IMR-90 (cell line): ENCODE measurements at regions of chr18 and their contacts with region 1.

Region 1: GRCh38 chr18:23356915-23357601 is 96.0 kb upstream of the RIOK3 start:
- DNase-seq: peak; percentile 55
- ATAC-seq: peak; percentile 62
- H3K4me3 ChIP-seq: no peak overlapping the region
- H3K27ac ChIP-seq: peak overlapping the region; percentile 98; the same call in 1 of the 2 replicates
- H3K4me1 ChIP-seq: peaks cover 23% of the 10 kb centered on the region
- H3K27me3 ChIP-seq: no peaks in the 10 kb centered on the region
- CTCF ChIP-seq: no peak
- POLR2A ChIP-seq: no peak
- RAD21 ChIP-seq: no peak

Region 2: DNA sequence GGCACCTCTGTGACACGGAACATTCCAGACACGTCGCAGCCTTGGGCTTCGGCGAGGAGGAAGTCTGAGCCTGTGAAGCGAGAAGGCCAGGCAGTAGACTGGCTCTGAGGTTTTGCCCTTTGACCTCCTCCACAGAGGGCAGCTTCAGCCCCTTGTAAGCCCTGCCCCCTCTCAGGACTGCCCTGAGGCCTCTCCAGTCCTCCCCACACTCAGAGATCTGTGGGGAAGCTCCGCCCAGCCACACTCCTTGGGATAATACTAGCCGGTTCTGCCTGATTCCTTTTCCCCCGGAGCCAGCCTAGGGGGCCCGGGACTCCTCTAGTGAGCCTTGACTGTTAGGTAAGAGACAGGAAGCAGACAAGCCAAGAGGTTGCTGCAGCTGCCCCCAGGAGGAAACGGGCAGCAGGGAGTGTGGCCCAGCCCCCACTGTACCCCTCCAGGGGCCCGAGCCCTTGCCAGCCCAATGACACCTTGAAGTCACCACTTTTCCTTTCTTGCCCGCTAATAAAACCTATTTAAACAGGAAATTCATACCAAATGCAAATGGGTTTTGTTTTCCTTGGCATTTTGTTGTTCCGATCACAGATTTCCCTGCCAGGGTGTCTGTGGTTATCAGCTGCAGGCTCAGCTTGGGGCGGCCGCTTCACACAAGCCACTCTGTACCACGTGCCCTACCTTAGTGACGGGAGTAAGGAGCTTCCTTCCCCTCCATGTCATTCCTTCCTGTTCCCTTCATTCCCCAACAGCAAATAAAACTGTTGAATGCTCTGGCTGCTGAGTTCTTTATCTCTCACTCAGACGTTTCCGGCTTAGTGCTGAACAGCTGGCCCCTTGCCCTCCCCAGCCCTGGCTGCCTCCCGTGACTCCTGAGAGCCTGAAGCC is 97.1 kb before region 1 on chr18:
- CTCF ChIA-PET with region 1: no interaction called
- POLR2A ChIA-PET with region 1: no interaction called
- dilution Hi-C with region 1: no loop called
- in situ Hi-C with region 1: no loop called
- intact Hi-C with region 1: loop called (anchors 10 kb)
- DNase-seq: peak; percentile 82
- ATAC-seq: peak; percentile 75
- H3K4me3 ChIP-seq: no peak overlapping the region
- H3K27ac ChIP-seq: peak overlapping the region; percentile 83
- H3K4me1 ChIP-seq: peaks cover 29% of the 10 kb centered on the region
- H3K27me3 ChIP-seq: no peaks in the 10 kb centered on the region
- CTCF ChIP-seq: no peak
- POLR2A ChIP-seq: no peak
- RAD21 ChIP-seq: no peak

Region 3: DNA sequence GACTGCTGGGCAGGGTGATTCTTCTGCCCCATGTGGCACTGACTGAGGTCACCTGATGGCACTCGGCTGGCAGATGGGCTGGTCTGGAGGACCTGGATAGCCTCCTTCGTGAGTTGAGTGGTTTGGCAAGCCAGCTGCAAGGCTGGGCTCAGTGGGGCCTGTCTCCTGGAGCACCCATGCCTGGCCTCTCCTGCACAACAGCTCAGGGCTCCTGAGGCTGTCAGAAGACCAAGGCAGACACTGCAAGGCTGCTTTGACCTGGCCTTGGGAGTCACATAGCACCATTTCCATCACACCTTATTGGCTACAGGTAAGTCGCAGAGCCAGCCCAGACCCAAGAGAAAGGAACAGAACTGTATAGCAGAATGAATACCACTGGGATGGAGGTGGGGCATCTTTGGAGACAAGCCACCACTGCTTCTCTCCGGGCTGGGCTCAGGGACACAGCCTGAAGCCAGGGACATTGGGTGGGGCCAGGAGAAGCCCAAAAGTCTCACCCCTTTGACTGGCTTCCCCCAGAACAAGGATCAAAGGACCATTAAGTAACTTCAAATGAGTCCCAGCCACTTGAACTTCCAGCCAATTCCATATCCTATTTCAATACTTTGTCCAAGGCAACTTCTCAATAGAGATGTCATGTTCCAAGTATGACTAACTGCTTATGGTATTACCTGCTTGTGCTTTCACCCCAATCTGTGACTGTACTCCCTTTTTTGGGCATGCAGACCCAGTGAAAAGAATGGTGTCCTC is 65.4 kb before region 1 on chr18:
- CTCF ChIA-PET with region 1: no interaction called
- POLR2A ChIA-PET with region 1: no interaction called
- dilution Hi-C with region 1: no loop called
- in situ Hi-C with region 1: loop called (anchors 10 kb)
- intact Hi-C with region 1: no loop called
- DNase-seq: peak; percentile 74
- ATAC-seq: peak; percentile 72
- H3K4me3 ChIP-seq: no peak overlapping the region
- H3K27ac ChIP-seq: no peak overlapping the region
- H3K4me1 ChIP-seq: peaks cover 12% of the 10 kb centered on the region
- H3K27me3 ChIP-seq: no peaks in the 10 kb centered on the region
- CTCF ChIP-seq: no peak
- POLR2A ChIP-seq: no peak
- RAD21 ChIP-seq: no peak

Region 4: DNA sequence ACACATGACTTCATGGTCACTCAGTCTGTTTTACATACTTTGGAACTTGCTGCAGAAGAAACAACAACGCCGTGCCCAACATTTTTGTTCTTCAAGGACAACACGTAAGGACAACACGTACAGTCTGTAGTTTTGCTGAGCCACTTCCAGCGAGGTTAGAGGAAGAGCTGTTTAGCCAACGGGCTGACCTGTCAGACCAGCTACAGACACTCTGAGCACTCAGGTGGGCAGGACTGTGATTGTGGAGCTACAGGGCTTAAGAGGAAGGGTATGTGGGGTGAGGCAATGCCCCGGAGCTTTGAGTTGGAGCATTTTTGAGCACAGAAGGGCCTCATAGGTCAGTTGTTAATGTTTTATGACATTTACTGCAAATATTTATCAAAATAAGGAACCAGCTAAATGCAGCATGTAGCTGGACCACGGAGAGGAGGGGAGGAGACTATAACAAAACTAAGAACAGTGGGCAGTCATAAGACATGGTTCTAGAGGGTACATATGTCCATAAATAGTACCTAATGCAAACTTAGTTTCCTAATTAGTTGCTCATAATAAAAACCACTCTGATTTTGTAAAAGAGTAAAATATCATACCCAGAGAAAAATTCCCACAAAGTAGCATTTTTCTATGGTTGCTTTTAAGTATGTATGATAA is 255.5 kb after region 1 on chr18:
- CTCF ChIA-PET with region 1: no interaction called
- POLR2A ChIA-PET with region 1: no interaction called
- dilution Hi-C with region 1: no loop called
- in situ Hi-C with region 1: no loop called
- intact Hi-C with region 1: no loop called
- DNase-seq: no peak
- ATAC-seq: no peak
- H3K4me3 ChIP-seq: no peak overlapping the region
- H3K27ac ChIP-seq: no peak overlapping the region
- H3K4me1 ChIP-seq: peaks cover 8% of the 10 kb centered on the region
- H3K27me3 ChIP-seq: peaks cover 4% of the 10 kb centered on the region; the same call in 1 of the 2 replicates
- CTCF ChIP-seq: no peak
- POLR2A ChIP-seq: no peak
- RAD21 ChIP-seq: no peak